CD4-positive, alpha-beta T cell (primary cell): ENCODE measurements at regions of chr5 and their contacts with region 1.

Region 1: DNA sequence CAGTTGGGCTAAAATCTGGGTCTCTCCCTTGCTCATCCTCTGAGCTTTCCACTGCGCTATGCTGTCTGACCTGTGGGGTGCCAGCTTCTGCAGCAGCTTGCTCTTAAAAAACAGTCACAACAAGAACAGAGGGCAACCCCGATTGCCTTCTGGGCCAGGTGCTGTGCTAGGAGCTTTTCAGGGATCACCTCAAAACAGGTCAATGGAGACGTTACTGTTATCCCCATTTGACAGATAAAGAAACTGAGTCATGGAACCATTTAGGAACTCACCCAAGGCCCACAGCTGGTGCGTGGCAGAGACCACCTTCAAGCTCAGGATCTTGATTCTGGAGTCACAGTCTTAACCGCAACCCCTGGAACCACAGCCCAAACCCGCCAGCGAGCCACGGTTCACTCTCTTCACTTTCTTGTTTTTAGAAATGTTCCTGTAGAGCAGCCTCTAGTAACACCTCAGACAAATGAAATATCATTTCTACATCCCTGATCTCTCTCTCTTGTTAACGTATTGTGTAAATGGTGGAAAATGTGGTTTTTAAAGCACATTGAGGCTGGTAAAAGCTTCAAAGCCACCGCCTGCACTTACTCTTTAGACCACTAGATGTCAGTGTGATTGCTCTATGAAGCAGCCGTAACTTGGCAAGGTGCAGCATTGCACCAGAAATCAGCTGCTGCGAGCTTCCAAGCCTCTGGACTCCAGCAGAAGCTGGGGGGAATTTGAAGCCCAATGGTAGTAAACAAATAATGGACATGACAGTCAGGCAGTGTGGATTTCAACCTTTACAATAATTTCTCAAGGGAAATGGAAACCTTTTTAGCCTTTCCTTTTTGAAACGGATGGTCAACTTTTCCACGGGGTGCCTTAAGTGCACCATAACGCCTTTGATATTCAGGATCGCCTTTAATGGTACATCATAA is 1.7 kb downstream of the FYB1 start:
- DNase-seq: peak; percentile 62 to 91 (median 74)
- ATAC-seq: peak; percentile 62
- H3K4me3 ChIP-seq: peak overlapping the region; percentile 65
- H3K4me3 Mint-ChIP-seq: peak overlapping the region; percentile 83
- H3K27ac ChIP-seq: peak overlapping the region; percentile 72 to 83
- H3K27ac Mint-ChIP-seq: peak overlapping the region; percentile 96
- H3K4me1 ChIP-seq: peaks cover 58% of the 10 kb centered on the region
- H3K4me1 Mint-ChIP-seq: peaks cover 86% of the 10 kb centered on the region
- H3K27me3 ChIP-seq: no peaks in the 10 kb centered on the region
- H3K27me3 Mint-ChIP-seq: no peaks in the 10 kb centered on the region
- CTCF ChIP-seq: peak; percentile 96

Region 2: GRCh38 chr5:38922199-38922598 is 295.4 kb before region 1 on chr5:
- CTCF ChIA-PET with region 1: no interaction called
- POLR2A ChIA-PET with region 1: no interaction called
- intact Hi-C with region 1: no loop called
- DNase-seq: peak in 13 of 14 experiments; percentile 12 to 64 (median 28)
- ATAC-seq: peak; percentile 48
- H3K4me3 ChIP-seq: no peak overlapping the region
- H3K4me3 Mint-ChIP-seq: no peak overlapping the region
- H3K27ac ChIP-seq: no peak overlapping the region
- H3K27ac Mint-ChIP-seq: no peak overlapping the region
- H3K4me1 ChIP-seq: no peaks in the 10 kb centered on the region
- H3K4me1 Mint-ChIP-seq: no peaks in the 10 kb centered on the region
- H3K27me3 ChIP-seq: peaks cover 0 to 3% of the 10 kb centered on the region in 2 experiments
- H3K27me3 Mint-ChIP-seq: peaks cover 40% of the 10 kb centered on the region
- CTCF ChIP-seq: peak; percentile 61

Region 3: GRCh38 chr5:39148983-39149534 is 68.6 kb before region 1 on chr5:
- CTCF ChIA-PET with region 1: interaction called, 22 read pairs
- POLR2A ChIA-PET with region 1: interaction called, 16 read pairs
- intact Hi-C with region 1: loop called (anchors 1 kb)
- DNase-seq: peak in 3 of 14 experiments; percentile 62 to 74 (median 70)
- ATAC-seq: peak; percentile 62
- H3K4me3 ChIP-seq: no peak overlapping the region
- H3K4me3 Mint-ChIP-seq: peak overlapping the region; percentile 0
- H3K27ac ChIP-seq: peak overlapping the region; percentile 58 to 61
- H3K27ac Mint-ChIP-seq: peak overlapping the region; percentile 86
- H3K4me1 ChIP-seq: peaks cover 51% of the 10 kb centered on the region
- H3K4me1 Mint-ChIP-seq: peaks cover 80% of the 10 kb centered on the region
- H3K27me3 ChIP-seq: no peaks in the 10 kb centered on the region
- H3K27me3 Mint-ChIP-seq: no peaks in the 10 kb centered on the region
- CTCF ChIP-seq: peak; percentile 66

Region 4: GRCh38 chr5:39177631-39177964 is 40.0 kb before region 1 on chr5:
- CTCF ChIA-PET with region 1: interaction called, 20 read pairs
- POLR2A ChIA-PET with region 1: interaction called, 120 read pairs
- intact Hi-C with region 1: loop called (anchors 1 to 5 kb)
- DNase-seq: peak in 5 of 14 experiments; percentile 30 to 82 (median 79)
- ATAC-seq: peak; percentile 64
- H3K4me3 ChIP-seq: peak overlapping the region; percentile 29
- H3K4me3 Mint-ChIP-seq: peak overlapping the region; percentile 61
- H3K27ac ChIP-seq: peak overlapping the region; percentile 58 to 85
- H3K27ac Mint-ChIP-seq: peak overlapping the region; percentile 96
- H3K4me1 ChIP-seq: peaks cover 57% of the 10 kb centered on the region
- H3K4me1 Mint-ChIP-seq: peaks cover 97% of the 10 kb centered on the region
- H3K27me3 ChIP-seq: no peaks in the 10 kb centered on the region
- H3K27me3 Mint-ChIP-seq: no peaks in the 10 kb centered on the region
- CTCF ChIP-seq: no peak

Region 5: DNA sequence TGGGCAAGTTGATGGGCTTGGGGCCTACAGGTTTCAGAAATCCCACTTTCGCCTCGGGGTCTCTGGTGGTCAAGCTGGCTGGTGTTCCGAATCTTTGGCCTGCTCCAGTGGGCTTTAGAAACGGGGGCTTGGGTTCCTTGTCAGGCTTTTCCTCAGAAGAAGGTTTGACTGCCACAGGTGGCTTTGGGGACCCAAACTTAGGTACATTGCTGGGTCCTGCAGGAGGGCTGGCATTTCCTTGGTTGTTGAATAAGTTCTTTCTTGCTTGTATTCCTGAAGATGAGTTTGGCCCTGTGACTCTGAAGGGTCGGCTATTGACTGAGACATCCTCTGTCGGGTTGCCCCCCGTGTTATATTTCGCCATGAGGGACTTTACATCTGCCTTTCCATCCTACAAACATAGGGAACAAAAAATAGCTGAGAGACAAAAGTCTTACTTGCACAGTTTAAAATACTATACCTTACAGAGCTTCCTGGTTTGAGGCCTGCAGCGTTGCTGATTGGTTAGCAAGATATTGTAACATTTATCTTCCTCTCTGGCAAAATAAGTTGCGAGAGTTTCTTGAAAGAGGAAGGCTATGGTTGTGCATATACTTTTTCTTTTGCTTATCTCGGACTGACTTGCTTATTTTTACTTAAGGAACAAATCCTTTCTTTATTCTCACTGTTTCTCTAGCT is 14.9 kb before region 1 on chr5:
- CTCF ChIA-PET with region 1: interaction called, 140 read pairs
- POLR2A ChIA-PET with region 1: interaction called, 209 read pairs
- intact Hi-C with region 1: loop called (anchors 2 kb)
- DNase-seq: peak in 6 of 14 experiments; percentile 35 to 83 (median 68)
- ATAC-seq: peak; percentile 62
- H3K4me3 ChIP-seq: peak overlapping the region; percentile 76
- H3K4me3 Mint-ChIP-seq: peak overlapping the region; percentile 93
- H3K27ac ChIP-seq: peak overlapping the region; percentile 82
- H3K27ac Mint-ChIP-seq: peak overlapping the region; percentile 96
- H3K4me1 ChIP-seq: peaks cover 28% of the 10 kb centered on the region
- H3K4me1 Mint-ChIP-seq: peaks cover 45% of the 10 kb centered on the region
- H3K27me3 ChIP-seq: no peaks in the 10 kb centered on the region
- H3K27me3 Mint-ChIP-seq: no peaks in the 10 kb centered on the region
- CTCF ChIP-seq: no peak

Region 6: GRCh38 chr5:39283231-39283818 is 65.7 kb after region 1 on chr5:
- CTCF ChIA-PET with region 1: interaction called, 53 read pairs
- POLR2A ChIA-PET with region 1: interaction called, 32 read pairs
- intact Hi-C with region 1: loop called (anchors 1 kb)
- DNase-seq: peak; percentile 5 to 90 (median 50)
- ATAC-seq: peak; percentile 100
- H3K4me3 ChIP-seq: no peak overlapping the region
- H3K4me3 Mint-ChIP-seq: peak overlapping the region; percentile 17
- H3K27ac ChIP-seq: no peak overlapping the region
- H3K27ac Mint-ChIP-seq: peak overlapping the region; percentile 67
- H3K4me1 ChIP-seq: peaks cover 9% of the 10 kb centered on the region
- H3K4me1 Mint-ChIP-seq: peaks cover 41% of the 10 kb centered on the region
- H3K27me3 ChIP-seq: no peaks in the 10 kb centered on the region
- H3K27me3 Mint-ChIP-seq: peaks cover 9% of the 10 kb centered on the region
- CTCF ChIP-seq: peak; percentile 81

Region 7: DNA sequence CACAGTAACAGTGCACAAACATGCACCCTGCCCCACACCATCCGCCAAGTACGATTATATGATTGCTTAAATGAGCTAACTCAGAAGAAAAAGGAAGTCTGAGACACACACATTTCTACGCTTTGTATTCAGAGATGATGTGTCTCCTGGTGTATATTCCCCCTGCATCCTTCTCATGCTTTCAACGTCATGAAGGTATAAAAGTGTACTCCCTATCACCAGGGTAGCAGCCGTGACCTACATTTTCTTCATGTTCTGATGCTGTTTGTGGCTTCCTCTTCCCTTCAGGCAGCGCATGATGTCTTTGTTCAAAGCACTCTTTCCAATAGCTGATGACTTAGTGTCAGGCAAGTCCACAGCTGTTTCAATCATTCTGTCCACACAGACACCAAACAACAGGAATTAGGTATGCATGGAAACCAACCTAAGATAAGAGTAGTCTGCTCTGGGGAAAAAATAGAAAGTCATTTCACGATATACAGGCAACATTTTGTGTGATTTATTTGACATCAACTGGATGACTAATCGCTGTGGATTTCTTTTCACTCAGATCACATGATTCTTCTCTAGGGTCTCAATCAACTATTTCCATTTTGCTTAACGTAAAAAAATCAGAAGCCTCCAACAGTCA is 1192.7 kb after region 1 on chr5:
- CTCF ChIA-PET with region 1: no interaction called
- POLR2A ChIA-PET with region 1: no interaction called
- intact Hi-C with region 1: loop called in 1 of 2 experiments (anchors 10 kb)
- DNase-seq: peak in 13 of 14 experiments; percentile 44 to 97 (median 66)
- ATAC-seq: peak; percentile 79
- H3K4me3 ChIP-seq: peak overlapping the region; percentile 33
- H3K4me3 Mint-ChIP-seq: peak overlapping the region; percentile 65
- H3K27ac ChIP-seq: peak overlapping the region; percentile 94 to 96
- H3K27ac Mint-ChIP-seq: peak overlapping the region; percentile 87
- H3K4me1 ChIP-seq: peaks cover 53% of the 10 kb centered on the region
- H3K4me1 Mint-ChIP-seq: peaks cover 53% of the 10 kb centered on the region
- H3K27me3 ChIP-seq: no peaks in the 10 kb centered on the region
- H3K27me3 Mint-ChIP-seq: no peaks in the 10 kb centered on the region
- CTCF ChIP-seq: no peak